MCF 10A (cell line): ENCODE measurements at regions of chr11 and their contacts with region 1.

Region 1: DNA sequence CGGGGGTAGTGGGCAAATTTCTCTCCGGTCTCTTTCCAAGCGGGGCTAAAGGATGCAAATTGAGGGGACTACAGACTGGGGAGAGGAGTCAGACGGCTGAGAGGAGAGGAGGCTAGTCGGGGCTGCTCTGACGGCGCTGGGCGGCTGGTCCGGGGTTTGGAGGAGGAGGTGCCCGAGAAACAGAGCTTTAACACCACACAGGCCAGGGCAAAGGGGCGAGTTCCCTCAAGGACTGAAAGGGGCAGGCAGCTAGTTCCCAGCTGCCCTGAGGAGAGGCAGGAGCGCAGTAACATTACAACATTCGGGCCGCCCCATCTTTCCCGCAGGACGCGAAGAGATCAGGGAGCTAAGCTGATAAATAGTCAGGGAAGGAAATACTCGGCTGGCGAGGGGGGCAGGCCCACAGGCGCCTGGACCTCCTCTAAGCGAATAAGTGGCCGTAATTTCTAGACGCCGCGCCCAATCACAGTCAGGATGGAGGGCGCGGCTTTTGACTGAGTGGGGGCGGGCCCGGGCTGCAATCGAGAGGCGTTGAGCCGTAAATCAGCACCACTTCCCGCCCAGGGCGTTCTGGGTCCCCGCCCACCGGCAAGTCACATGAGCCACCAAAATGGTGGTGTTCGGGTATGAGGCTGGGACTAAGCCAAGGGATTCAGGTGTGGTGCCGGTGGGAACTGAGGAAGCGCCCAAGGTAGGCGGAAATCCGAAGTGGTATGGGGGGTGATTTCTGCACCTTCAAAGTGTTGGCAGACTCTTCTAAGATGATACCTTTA is at the start of gene TMEM126B:
- DNase-seq: peak; percentile 98
- H3K4me3 Mint-ChIP-seq: peak within 1 kb of the TSS; percentile 92
- H3K27ac Mint-ChIP-seq: peak within 1 kb of the TSS; percentile 96
- H3K4me1 Mint-ChIP-seq: peaks cover 14% of the 10 kb centered on the region
- H3K27me3 Mint-ChIP-seq: no peaks in the 10 kb centered on the region
- CTCF ChIP-seq: no peak
- total RNA-seq, gene TMEM126B: 38.4 and 50.4 TPM in 2 replicates

Region 2: DNA sequence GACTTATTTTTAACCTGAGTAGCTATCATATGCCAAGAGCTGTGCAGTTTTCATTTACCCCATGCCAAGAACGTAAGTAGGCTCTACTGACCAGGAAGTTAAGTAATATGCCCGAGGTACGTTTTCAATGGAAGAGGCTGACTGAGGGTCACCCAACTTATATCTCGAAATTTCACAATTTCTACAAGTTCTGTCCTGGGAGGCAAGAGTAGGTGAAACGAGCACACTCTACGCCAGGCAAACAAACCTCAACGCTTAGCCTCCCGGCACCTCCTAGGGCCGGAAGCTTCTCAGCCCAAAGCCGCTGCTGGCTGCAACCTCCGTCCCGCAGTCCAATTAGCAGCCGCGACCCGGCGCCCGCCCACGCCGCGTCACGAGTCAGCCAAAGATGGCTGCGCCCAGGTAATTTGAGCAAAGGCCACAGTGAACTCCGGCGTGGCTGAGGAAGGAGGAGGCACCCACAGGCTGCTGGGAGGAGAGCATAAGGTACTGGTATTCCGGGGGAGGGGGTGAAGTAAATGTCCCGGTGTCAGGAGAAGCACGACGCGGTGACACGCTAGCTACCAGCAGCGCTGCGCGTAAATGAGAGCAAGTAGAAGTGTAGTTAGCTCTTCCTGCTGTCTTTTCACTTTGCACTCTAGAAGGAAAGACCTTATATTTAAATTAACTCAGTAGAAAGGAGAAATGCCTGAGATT is 19.6 kb after region 1 on chr11 and contains the start of gene TMEM126A:
- CTCF ChIA-PET with region 1: interaction called, 4 read pairs
- POLR2A ChIA-PET with region 1: interaction called, 152 read pairs
- intact Hi-C with region 1: no loop called
- DNase-seq: peak; percentile 91
- H3K4me3 Mint-ChIP-seq: peak within 1 kb of the TSS; percentile 83
- H3K27ac Mint-ChIP-seq: peak within 1 kb of the TSS; percentile 97
- H3K4me1 Mint-ChIP-seq: peaks cover 8% of the 10 kb centered on the region
- H3K27me3 Mint-ChIP-seq: peaks cover 2% of the 10 kb centered on the region
- CTCF ChIP-seq: no peak
- total RNA-seq, gene TMEM126A: 33.5 and 34.9 TPM in 2 replicates

Region 3: DNA sequence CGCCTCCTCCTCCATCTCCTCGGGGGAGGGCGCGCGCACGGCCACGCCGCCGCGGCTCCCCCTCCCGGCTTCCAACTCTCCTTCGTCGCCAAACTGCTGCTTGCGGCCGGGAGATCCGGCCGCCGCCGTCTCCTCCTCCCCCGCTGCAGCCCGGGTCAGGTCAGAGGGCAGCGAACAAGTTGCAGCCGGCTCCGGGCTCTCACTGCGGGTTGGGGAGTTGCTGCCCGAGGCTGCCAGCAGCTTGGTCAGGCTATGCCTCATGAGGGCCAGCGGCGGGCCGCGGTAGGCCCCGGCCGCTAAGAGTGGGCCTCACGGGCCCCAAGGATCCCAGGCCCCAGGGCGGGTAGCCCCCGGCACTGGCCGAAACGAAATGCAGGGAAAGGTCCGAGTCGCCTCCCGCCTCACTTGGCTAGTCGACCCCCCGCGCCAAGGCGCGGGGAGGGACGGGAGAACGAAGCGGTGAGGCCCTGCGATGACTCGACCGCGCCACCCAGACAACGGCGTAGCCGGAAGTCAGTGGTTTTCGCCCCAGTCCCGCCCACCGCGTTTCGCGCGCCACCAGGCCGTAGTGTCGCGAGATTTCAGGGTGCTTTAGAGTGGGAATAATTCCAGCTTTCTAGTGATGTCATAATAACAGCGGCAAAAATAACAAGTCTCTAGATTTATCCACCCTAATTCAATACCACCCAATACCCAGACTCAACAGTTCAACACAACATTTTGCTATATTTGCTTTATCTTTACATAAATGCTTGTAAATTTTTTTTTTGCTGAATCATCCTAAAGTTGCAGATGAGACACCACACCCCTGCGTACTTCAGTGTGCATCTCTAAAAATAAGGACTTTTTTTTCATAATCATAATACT is 36.7 kb after region 1 on chr11 and contains the start of gene CREBZF:
- CTCF ChIA-PET with region 1: interaction called, 3 read pairs
- POLR2A ChIA-PET with region 1: interaction called, 62 read pairs
- intact Hi-C with region 1: loop called (anchors 2 kb)
- DNase-seq: peak; percentile 96
- H3K4me3 Mint-ChIP-seq: peak within 1 kb of the TSS; percentile 95
- H3K27ac Mint-ChIP-seq: peak within 1 kb of the TSS; percentile 95
- H3K4me1 Mint-ChIP-seq: peaks cover 27% of the 10 kb centered on the region
- H3K27me3 Mint-ChIP-seq: no peaks in the 10 kb centered on the region
- CTCF ChIP-seq: no peak
- total RNA-seq, gene CREBZF: 34.3 and 36.0 TPM in 2 replicates

Region 4: GRCh38 chr11:85826116-85826855 is 198.1 kb after region 1 on chr11:
- CTCF ChIA-PET with region 1: no interaction called
- POLR2A ChIA-PET with region 1: interaction called, 3 read pairs
- intact Hi-C with region 1: loop called (anchors 10 kb)
- DNase-seq: peak; percentile 44
- H3K4me3 Mint-ChIP-seq: no peak overlapping the region
- H3K27ac Mint-ChIP-seq: peak overlapping the region; percentile 92
- H3K4me1 Mint-ChIP-seq: peaks cover 31% of the 10 kb centered on the region
- H3K27me3 Mint-ChIP-seq: no peaks in the 10 kb centered on the region
- CTCF ChIP-seq: peak; percentile 42

Region 5: DNA sequence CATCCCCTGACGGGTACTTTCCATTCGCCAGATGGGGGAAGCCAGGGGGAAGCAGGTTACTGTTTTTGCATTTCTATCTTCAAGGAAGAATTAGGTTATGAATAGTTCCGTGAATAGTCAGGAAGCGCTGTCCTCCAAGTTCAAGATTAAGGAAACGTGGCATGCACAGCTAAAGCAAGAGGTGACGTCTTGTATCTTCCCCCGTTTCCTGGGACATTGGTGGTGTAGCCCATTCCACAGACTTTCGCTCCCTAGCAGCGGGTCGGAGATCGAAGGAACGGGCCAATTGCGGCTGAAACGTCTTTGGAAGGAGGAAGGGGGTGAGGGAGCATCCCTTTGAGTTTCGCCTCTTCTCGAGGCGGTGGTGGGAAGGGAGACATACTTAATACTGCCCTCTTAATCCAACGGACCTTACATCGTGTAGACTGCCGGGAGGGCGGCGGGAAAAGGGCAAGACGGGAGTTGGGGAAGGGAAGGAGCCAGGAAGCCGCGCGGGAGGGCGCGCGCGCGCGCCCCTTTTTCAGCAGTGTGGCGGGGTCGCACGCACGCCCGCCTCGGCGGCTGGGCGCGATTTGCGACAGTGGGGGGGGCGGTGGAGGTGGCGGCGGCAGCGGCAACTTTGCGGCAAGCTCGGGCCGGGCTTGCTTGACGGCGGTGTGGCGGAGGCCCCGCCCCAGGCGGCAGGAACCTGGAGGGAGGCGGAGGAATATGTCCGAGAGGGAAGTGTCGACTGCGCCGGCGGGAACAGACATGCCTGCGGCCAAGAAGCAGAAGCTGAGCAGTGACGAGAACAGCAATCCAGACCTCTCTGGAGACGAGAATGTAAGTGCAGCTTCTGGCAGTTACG is 616.6 kb after region 1 on chr11 and contains the start of gene EED:
- CTCF ChIA-PET with region 1: no interaction called
- POLR2A ChIA-PET with region 1: interaction called, 8 read pairs
- intact Hi-C with region 1: loop called (anchors 1 kb)
- DNase-seq: peak; percentile 91
- H3K4me3 Mint-ChIP-seq: no peak within 1 kb of the TSS
- H3K27ac Mint-ChIP-seq: no peak within 1 kb of the TSS
- H3K4me1 Mint-ChIP-seq: peaks cover 30% of the 10 kb centered on the region
- H3K27me3 Mint-ChIP-seq: no peaks in the 10 kb centered on the region
- CTCF ChIP-seq: no peak
- total RNA-seq, gene EED: 20.9 and 22.9 TPM in 2 replicates